Activated naive CD4-positive, alpha-beta T cell treated with anti-CD3 and anti-CD28 coated beads, Interleukin-2, amount 10 ng/mL, durations not matched to agents 7 days and 5 days (primary cell): ENCODE measurements at regions of chr5 and their contacts with region 1.

Region 1: GRCh38 chr5:54492178-54492577 is 25.4 kb upstream of the SNX18 start:
- DNase-seq: no peak
- H3K4me3 Mint-ChIP-seq: no peak overlapping the region
- H3K27ac Mint-ChIP-seq: no peak overlapping the region
- H3K4me1 Mint-ChIP-seq: no peaks in the 10 kb centered on the region
- H3K27me3 Mint-ChIP-seq: peaks cover 13% of the 10 kb centered on the region

Region 2: GRCh38 chr5:54243473-54244080 is 248.6 kb before region 1 on chr5:
- CTCF ChIA-PET with region 1: interaction called, 31 read pairs
- DNase-seq: peak; percentile 51
- H3K4me3 Mint-ChIP-seq: no peak overlapping the region
- H3K27ac Mint-ChIP-seq: no peak overlapping the region
- H3K4me1 Mint-ChIP-seq: peaks cover 3% of the 10 kb centered on the region
- H3K27me3 Mint-ChIP-seq: no peaks in the 10 kb centered on the region

Region 3: DNA sequence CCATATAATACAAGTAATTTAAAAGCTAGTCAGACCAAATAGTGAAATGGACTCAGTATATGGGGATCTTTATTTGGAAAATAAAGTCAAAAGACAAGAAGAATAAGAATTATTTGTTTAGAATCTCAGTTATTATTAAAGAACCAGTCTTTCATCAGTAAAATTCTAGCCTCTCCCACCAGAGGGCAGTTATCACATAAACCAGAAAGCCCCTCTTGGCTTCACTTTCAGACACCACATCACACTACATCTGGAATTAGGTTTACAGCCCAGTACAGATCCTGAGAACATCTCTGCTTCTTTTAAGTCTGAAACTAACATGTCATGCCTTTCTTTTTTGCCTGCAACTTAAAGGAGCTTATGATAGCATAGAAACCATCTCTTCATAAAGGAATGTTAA is 48.9 kb before region 1 on chr5:
- CTCF ChIA-PET with region 1: interaction called, 16 read pairs
- DNase-seq: no peak
- H3K4me3 Mint-ChIP-seq: no peak overlapping the region
- H3K27ac Mint-ChIP-seq: no peak overlapping the region
- H3K4me1 Mint-ChIP-seq: peaks cover 37% of the 10 kb centered on the region
- H3K27me3 Mint-ChIP-seq: peaks cover 13% of the 10 kb centered on the region

Region 4: DNA sequence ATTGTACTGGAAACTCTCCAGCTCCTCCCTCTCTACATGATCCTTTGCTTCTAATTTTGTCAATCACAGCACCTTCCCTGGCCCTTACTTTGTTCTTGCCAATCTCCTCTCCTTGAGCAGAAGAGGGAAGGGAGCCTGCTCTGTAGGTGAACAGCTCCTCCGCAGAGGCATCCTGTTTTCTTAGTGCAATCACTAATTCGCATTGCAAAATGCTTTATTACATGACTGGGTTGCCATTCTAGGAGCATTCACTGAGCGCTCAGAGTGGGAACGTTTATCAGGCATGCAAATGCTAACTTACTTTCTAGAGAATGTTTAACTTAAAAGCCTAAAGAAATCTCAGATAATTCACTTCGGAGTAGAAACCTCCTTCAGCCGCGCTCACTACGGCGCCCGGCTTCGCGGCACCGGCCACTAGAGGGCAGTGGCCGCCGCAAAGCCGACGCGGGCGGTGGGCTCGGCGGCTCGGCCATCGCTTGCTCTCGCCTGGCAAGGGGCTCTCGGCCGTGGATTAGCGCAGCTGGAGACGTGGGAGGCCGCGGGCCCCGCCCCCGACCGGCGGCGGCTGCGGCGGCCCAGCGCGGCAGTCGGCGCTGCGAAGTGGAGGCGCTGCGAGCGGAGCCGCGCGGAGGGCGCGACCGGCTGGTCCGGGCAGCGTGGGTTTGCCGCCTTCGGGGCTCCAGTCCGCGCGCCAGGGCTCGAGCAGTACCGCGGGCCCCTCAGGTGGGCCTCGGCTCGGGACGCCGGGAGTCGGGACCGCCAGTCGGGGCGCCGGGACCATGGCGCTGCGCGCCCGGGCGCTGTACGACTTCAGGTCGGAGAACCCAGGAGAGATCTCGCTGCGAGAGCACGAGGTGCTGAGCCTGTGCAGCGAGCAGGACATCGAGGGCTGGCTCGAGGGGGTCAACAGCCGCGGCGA is 25.3 kb after region 1 on chr5 and contains the start of gene SNX18:
- CTCF ChIA-PET with region 1: interaction called, 11 read pairs
- DNase-seq: peak; percentile 93
- H3K4me3 Mint-ChIP-seq: peak within 1 kb of the TSS; percentile 83
- H3K27ac Mint-ChIP-seq: peak within 1 kb of the TSS; percentile 74
- H3K4me1 Mint-ChIP-seq: peaks cover 45% of the 10 kb centered on the region
- H3K27me3 Mint-ChIP-seq: peaks cover 23% of the 10 kb centered on the region

Region 5: GRCh38 chr5:54616031-54616430 is 123.9 kb after region 1 on chr5:
- CTCF ChIA-PET with region 1: no interaction called
- DNase-seq: no peak
- H3K4me3 Mint-ChIP-seq: no peak overlapping the region
- H3K27ac Mint-ChIP-seq: no peak overlapping the region
- H3K4me1 Mint-ChIP-seq: peaks cover 26% of the 10 kb centered on the region
- H3K27me3 Mint-ChIP-seq: peaks cover 14% of the 10 kb centered on the region